Heart right ventricle (tissue), 16 donors: ENCODE measurements at regions of chr15 and their contacts with region 1.

Region 1: GRCh38 chr15:82737975-82738374 is 28.3 kb upstream of the AP3B2 start:
- DNase-seq: no peak
- ATAC-seq: no peak
- H3K4me3 ChIP-seq: no peak overlapping the region
- H3K27ac ChIP-seq: no peak overlapping the region
- H3K4me1 ChIP-seq: no peaks in the 10 kb centered on the region
- H3K27me3 ChIP-seq: no peaks in the 10 kb centered on the region
- CTCF ChIP-seq: no peak

Region 2: GRCh38 chr15:82548700-82549099 is 189.3 kb before region 1 on chr15:
- intact Hi-C with region 1: loop called in 2 of 10 experiments (anchors 5 to 10 kb)
- DNase-seq: no peak
- ATAC-seq: no peak
- H3K4me3 ChIP-seq: no peak overlapping the region
- H3K27ac ChIP-seq: no peak overlapping the region
- H3K4me1 ChIP-seq: no peaks in the 10 kb centered on the region
- H3K27me3 ChIP-seq: peaks cover 0 to 4% (median 0%) of the 10 kb centered on the region in 7 donors
- CTCF ChIP-seq: no peak

Region 3: DNA sequence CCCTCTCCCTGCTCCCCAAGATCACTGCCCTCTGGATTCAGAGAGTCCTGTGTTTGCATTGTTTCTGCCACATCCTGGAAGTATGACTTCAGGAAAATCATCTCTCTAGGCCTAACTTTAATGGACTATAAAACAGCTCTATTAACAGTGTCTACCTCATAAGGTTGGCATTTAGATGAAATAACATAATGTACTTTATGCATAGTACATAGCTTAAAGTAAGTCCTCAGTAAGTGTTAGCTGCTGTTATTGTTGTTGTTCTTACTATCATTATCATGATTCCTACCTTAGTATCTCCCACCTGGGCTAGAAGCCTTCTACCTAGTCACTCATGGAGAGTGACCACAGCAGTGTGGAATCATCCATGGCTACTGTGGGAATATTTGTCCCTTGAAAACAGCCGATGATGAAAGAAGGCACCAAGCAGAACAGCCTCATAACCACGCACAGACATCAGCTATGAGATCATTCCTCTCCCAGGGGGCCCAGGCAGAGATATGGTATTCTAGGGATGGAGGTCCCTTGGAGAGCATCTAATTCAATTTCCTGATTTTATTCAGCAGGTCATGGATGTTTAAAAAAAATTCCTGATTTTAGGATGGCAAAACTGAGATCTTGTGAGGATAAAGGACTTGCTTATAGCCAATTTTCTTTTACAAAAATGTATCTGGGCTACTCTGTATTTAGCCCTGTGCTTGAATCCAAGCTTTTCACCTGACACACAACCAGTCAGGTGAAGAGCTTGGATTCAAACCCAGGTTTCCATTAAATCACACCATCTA is 66.0 kb after region 1 on chr15:
- intact Hi-C with region 1: loop called in 1 of 10 experiments (anchors 5 kb)
- DNase-seq: no peak
- ATAC-seq: peak in 1 of 8 donors; percentile 9
- H3K4me3 ChIP-seq: peak overlapping the region; percentile 26 to 58 (median 46)
- H3K27ac ChIP-seq: peak overlapping the region; percentile 5 to 100 (median 78)
- H3K4me1 ChIP-seq: peaks cover 0 to 52% (median 24%) of the 10 kb centered on the region in 9 donors
- H3K27me3 ChIP-seq: no peaks in the 10 kb centered on the region
- CTCF ChIP-seq: no peak